Adrenal gland (tissue), 19 donors: ENCODE measurements at regions of chr10 and their contacts with region 1.

Region 1: DNA sequence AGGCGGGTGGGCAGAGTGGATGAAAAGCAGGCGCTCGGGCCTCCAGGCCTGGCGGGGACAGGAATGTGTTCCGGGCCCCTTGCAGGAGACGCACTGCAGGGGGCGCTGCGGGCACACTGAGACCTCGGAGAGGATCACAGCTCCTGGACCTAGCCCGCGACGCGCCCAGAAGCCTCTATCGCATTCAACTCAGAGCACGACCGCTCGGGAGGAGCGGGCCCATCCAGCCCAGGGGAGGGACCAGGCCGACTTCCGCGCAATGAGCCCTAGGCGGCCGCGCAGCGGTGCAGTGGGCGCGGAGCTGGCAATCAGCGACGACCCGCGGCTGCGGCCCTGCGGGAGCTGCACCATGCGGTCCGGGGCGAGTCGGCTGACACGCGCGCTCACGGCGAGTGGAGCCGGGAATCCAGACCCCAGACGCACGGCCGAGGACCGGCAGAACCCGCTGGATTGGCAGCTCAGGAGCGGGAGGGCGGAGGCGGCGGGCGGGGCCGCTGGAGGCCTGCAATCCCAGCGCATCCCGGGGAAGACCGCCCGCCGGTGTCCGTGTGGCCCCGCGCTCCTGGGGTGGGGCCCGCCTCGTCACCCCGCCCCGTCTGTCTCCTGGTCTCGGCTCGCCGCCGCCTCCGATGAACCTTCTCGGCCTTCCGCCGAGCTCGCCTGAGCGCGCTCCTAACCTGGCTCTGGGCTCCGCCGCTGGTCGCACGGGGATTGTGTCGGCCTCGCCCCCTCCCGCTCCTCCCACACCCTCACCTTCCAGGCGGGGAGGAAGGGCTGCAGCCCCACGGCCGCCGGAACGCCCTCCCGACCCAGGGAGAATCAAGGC is 33.5 kb upstream of the GRID1 start:
- DNase-seq: peak; percentile 95 to 98 (median 97)
- H3K4me3 ChIP-seq: peak overlapping the region in 2 of 4 donors; percentile 47 to 72
- H3K27ac ChIP-seq: peak overlapping the region in 3 of 5 donors; percentile 72 to 90 (median 90)
- H3K4me1 ChIP-seq: peaks cover 15 to 19% of the 10 kb centered on the region in 2 donors
- H3K27me3 ChIP-seq: no peaks in the 10 kb centered on the region
- CTCF ChIP-seq: peak; percentile 89 to 98 (median 93)
- POLR2A ChIP-seq: peak; percentile 44 to 51

Region 2: DNA sequence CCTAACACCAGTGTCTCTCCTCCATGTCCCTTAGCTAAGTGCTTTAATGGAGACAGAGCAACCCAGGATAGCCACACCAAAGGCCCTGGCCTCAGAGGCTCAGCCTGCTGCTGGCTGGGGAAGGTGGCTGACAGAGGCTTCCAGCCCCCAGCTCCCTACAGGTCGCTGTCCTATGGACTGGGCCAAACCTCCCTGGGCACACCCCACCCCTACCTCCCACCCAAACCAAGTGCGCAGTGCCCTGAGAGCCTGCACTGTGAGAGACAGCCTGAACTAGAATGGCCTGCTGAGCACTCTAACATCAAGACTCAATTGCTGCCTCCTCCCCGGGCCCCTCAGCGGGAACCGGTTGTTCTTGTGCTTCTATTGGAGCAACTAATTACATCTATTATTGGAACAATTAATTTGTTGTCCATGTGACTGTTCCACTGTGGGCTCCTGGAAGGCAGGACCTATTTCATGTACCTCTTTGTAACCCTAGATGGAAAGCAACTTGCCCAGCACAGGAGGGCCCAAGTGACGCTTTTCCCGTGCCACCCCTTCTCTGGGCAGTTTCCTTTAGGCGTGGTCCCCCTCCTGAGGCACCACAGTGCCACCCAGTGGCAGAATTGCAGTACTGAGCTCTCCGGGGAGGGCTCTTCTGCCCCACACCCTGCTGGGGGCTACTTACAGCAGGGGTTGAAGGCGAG is 185.1 kb after region 1 on chr10:
- intact Hi-C with region 1: loop called (anchors 2 to 5 kb)
- DNase-seq: peak; percentile 55 to 92 (median 65)
- H3K4me3 ChIP-seq: no peak overlapping the region
- H3K27ac ChIP-seq: no peak overlapping the region
- H3K4me1 ChIP-seq: no peaks in the 10 kb centered on the region
- H3K27me3 ChIP-seq: no peaks in the 10 kb centered on the region
- CTCF ChIP-seq: peak; percentile 93 to 99 (median 96)
- POLR2A ChIP-seq: no peak